ENCODE measurements at regions of chr18 and their contacts with region 1.

Region 1: GRCh38 chr18:11840493-11840892 is 10.7 kb upstream of the CHMP1B start:
- DNase-seq: no peak
- ATAC-seq: no peak
- H3K4me3 Mint-ChIP-seq: no peak overlapping the region
- H3K27ac Mint-ChIP-seq: no peak overlapping the region
- H3K4me1 Mint-ChIP-seq: no peaks in the 10 kb centered on the region
- H3K27me3 Mint-ChIP-seq: no peaks in the 10 kb centered on the region

Region 2: GRCh38 chr18:11899063-11899462 is 58.6 kb after region 1 on chr18:
- CTCF ChIA-PET with region 1: no interaction called
- POLR2A ChIA-PET with region 1: interaction called, 11 read pairs
- intact Hi-C with region 1: no loop called
- DNase-seq: no peak
- ATAC-seq: no peak
- H3K4me3 Mint-ChIP-seq: no peak overlapping the region
- H3K27ac Mint-ChIP-seq: no peak overlapping the region
- H3K4me1 Mint-ChIP-seq: no peaks in the 10 kb centered on the region
- H3K27me3 Mint-ChIP-seq: no peaks in the 10 kb centered on the region